ENCODE measurements at regions of chr3 and their contacts with region 1.

Region 1: GRCh38 chr3:31754575-31755278 is 222.0 kb downstream of the STT3B start:
- DNase-seq: no peak
- H3K4me3 Mint-ChIP-seq: peak overlapping the region; percentile 66
- H3K27ac Mint-ChIP-seq: peak overlapping the region; percentile 94
- H3K4me1 Mint-ChIP-seq: peaks cover 61% of the 10 kb centered on the region
- H3K27me3 Mint-ChIP-seq: no peaks in the 10 kb centered on the region

Region 2: GRCh38 chr3:31105438-31106077 is 649.2 kb before region 1 on chr3:
- intact Hi-C with region 1: loop called (anchors 1 kb)
- DNase-seq: peak; percentile 17
- H3K4me3 Mint-ChIP-seq: no peak overlapping the region
- H3K27ac Mint-ChIP-seq: peak overlapping the region; percentile 49
- H3K4me1 Mint-ChIP-seq: peaks cover 55% of the 10 kb centered on the region
- H3K27me3 Mint-ChIP-seq: no peaks in the 10 kb centered on the region

Region 3: DNA sequence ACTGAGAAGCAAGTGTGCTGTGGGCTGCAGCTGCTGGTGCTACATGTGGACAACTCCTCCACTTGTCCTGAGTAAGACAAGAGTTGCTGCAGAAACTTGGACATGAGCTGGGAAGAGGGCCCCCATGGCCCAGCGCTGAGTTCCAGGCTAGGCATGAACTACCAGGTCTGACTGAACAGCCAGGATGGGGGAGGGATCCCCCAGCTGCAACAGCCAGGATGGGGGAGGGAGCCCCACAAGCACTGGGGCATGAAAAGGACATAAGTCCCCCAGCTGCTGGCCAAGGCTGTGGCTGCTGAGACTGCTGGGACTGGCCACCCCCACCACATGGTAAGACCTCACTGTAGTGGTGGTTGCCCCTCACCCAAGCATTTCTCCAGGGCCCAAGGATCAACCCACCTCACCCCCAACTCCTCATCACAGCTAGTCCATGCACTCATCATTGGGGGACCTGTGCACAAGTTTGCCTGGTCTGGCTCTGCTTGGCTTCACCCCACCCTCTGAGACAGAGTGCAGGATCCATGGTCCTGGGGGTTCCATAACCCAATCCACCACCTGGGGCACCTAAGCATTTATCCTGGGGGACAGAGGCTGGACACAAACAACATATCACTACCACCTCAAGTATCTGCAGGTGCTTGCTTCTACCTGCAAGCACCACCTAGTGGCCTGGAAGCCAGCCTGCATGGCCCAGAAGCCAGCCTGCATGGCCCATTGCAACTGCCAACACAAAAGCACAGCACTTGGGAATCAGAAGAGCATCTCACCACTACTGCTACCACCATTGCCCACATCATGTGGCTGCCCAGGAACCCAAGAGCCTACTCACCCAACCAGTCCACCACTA is 306.5 kb before region 1 on chr3:
- intact Hi-C with region 1: loop called (anchors 1 kb)
- DNase-seq: peak; percentile 4
- H3K4me3 Mint-ChIP-seq: no peak overlapping the region
- H3K27ac Mint-ChIP-seq: peak overlapping the region; percentile 13
- H3K4me1 Mint-ChIP-seq: peaks cover 30% of the 10 kb centered on the region
- H3K27me3 Mint-ChIP-seq: peaks cover 3% of the 10 kb centered on the region

Region 4: GRCh38 chr3:31634481-31634880 is 120.2 kb before region 1 on chr3:
- intact Hi-C with region 1: loop called (anchors 1 kb)
- DNase-seq: no peak
- H3K4me3 Mint-ChIP-seq: no peak overlapping the region
- H3K27ac Mint-ChIP-seq: no peak overlapping the region
- H3K4me1 Mint-ChIP-seq: peaks cover 43% of the 10 kb centered on the region
- H3K27me3 Mint-ChIP-seq: no peaks in the 10 kb centered on the region

Region 5: GRCh38 chr3:31768479-31769123 is 13.9 kb after region 1 on chr3:
- intact Hi-C with region 1: loop called (anchors 1 kb)
- DNase-seq: peak; percentile 42
- H3K4me3 Mint-ChIP-seq: peak overlapping the region; percentile 41
- H3K27ac Mint-ChIP-seq: peak overlapping the region; percentile 52
- H3K4me1 Mint-ChIP-seq: peaks cover 82% of the 10 kb centered on the region
- H3K27me3 Mint-ChIP-seq: no peaks in the 10 kb centered on the region

Region 6: GRCh38 chr3:32106280-32106928 is 351.7 kb after region 1 on chr3 and contains the start of gene GPD1L:
- intact Hi-C with region 1: loop called (anchors 2 kb)
- DNase-seq: peak; percentile 93
- H3K4me3 Mint-ChIP-seq: peak within 1 kb of the TSS; percentile 97
- H3K27ac Mint-ChIP-seq: peak within 1 kb of the TSS; percentile 89
- H3K4me1 Mint-ChIP-seq: peaks cover 28% of the 10 kb centered on the region
- H3K27me3 Mint-ChIP-seq: no peaks in the 10 kb centered on the region
- total RNA-seq, gene GPD1L: 16.3 and 16.6 TPM in 2 replicates